ENCODE measurements at regions of chr18 and their contacts with region 1.

Region 1: DNA sequence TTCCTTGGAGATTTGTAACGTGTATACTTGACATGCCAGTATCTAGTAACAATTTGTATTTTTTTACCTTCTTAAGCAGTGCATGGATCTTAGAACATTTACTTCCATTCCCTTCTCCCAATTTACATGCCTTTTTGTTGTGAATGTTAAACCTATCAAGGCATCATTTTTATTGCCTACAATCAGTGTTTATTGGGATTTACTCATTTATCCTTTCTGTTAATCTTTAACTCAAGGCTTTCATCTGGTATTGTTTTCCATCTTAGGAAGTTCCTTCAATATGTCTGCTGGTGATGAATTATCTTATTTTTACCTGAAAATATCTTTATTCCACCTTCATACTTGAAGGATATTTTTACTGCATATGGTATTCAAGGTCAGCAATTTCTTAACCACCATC is 88.5 kb upstream of the EMILIN2 start:
- DNase-seq: no peak
- ATAC-seq: no peak

Region 2: DNA sequence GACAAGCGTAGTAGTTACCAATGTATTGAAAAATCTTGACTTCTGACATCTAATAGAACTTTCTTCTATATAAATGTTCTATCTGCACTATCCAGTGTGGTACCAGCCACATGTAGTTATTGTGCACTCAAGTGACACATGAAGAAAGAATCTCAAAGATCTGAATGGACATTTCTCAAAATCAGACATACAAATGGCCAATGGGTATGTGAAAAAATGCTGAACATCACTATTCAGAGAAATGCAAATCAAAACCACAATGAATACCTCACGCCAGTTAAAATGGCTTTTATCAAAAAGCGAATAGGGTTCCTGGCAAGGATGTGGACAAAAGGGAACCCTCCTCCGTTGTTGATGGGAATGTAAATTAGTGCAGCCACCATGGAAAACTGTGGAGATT is 140.3 kb before region 1 on chr18:
- intact Hi-C with region 1: no loop called
- DNase-seq: no peak
- ATAC-seq: no peak

Region 3: DNA sequence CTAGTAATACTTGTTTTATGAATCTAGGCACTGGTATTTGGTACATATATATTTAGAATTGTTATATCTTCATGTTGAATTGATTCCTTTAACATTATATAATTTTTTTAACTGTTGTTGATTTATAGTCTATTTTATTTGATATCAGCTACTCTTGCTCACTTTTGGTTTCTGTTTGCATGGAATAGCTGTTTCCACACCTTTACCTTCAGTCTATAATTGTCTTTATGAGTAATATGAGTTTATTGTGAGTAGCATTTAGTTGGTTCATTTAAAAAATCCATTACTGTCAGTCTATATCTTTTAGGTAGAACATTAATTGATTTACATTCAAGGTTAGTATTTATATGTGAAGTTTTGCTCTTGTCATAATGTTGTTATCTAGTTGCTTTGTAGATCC is 44.2 kb before region 1 on chr18:
- intact Hi-C with region 1: loop called (anchors 1 kb)
- DNase-seq: no peak
- ATAC-seq: no peak

Region 4: DNA sequence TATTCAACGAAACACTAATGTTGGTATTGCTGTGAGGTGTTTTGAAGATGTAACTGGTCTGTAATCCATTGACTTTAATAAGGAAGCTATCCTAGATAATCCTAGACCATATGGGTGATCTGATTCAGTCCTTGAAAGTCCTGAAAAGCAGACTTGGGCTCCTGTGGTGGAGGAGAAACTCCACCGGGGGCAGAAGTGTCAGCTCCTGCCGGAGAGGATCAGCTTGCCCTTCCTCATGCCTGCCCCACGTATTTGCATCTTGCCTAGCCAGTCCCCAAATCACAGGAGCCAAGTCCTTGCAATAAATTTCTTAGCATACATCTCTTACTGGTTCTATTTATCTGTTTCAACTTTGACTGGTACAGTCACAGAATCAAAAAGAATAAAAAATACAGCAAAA is 1841.0 kb after region 1 on chr18:
- intact Hi-C with region 1: no loop called
- DNase-seq: no peak
- ATAC-seq: no peak